ENCODE measurements at regions of chr10 and their contacts with region 1.

Region 1: DNA sequence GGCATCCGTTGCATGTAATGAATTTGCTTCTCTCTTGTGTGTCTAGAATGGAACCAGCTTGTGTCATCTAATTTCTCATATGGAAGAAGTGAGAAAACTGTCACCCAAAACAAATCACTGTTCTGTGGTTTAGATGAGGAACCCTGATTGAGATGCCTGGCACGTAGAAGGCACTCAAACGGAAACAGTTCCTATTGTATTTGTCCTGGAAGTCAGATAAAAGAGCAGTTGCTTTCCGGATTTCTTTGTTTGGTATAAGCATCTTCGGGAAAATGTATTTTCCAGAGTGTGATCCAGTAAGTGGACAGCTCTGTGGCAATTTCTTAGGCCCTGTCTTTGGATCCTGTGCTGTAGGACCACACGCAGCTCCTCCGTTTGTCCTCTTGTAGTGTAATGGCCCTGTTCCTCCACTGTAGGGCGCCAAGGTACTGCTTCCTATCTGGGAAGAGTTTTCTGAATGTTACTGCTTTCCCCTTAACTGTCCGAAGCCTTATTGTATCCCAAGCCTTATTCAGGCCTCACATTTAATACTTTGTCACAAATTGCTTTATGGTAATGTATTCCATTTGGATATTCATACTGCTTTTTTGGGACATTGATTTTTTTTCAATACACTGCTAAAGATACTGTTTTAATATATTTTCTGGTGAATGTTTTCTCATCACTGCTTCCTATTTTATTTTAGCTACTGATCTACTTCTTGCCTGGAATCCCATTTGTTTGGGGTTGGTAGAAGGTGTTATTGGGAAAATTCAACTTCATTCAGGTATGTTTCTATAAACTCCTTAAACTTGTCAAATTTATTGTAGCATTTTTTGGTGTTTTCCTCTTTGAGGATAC is 24.8 kb downstream of the INPP5F start:
- DNase-seq: peak; percentile 68 to 80 (median 76)
- H3K4me3 ChIP-seq: no peak overlapping the region
- H3K27ac ChIP-seq: no peak overlapping the region
- H3K4me1 ChIP-seq: peaks cover 0 to 7% (median 1%) of the 10 kb centered on the region in 4 experiments
- H3K27me3 ChIP-seq: no peaks in the 10 kb centered on the region

Region 2: DNA sequence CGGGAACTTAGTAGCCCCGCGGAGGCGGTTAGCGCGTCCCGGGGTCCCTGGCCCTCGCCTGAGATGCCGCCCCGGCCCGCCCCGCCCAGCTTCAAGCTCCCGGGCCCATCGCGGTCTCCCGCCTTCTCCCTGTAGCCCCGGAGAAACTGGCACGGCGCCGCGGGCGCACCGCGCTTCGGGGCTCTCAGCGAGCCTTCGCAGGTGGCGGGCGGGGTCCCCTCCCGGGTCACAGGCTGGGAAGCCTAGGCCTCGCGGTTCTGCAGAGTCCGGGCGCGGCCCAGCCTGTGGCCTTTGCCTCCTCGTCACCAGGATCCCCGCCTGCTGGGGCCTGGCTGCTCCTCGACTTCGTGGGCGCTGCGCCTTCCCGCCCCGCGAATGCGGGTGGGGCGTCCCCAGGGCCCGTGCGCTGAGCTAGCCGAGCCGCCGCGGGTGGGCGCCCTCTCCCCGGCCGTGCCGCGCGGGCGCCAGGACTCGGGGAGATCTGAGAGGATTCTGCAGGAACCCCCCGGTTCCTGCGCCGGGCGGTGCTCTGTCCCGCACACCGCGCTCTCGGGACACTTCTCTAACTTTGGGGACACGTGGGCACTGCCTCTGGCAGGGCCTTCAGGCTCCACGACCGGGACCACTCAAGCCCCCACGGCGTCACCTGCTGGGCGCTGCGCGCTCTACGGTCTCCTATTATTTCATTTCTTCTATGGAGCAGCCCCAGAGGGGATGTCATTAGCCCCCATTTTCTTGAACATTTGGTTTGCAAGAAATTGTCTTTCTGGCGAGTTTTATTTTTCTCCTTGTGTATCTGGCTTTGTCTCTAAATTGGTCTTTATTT is 207.4 kb before region 1 on chr10:
- CTCF ChIA-PET with region 1: no interaction called
- POLR2A ChIA-PET with region 1: no interaction called
- DNase-seq: peak; percentile 69 to 84 (median 79)
- H3K4me3 ChIP-seq: peak overlapping the region; percentile 63 to 89 (median 84)
- H3K27ac ChIP-seq: no peak overlapping the region
- H3K4me1 ChIP-seq: peaks cover 4 to 53% (median 43%) of the 10 kb centered on the region in 4 experiments
- H3K27me3 ChIP-seq: no peaks in the 10 kb centered on the region

Region 3: DNA sequence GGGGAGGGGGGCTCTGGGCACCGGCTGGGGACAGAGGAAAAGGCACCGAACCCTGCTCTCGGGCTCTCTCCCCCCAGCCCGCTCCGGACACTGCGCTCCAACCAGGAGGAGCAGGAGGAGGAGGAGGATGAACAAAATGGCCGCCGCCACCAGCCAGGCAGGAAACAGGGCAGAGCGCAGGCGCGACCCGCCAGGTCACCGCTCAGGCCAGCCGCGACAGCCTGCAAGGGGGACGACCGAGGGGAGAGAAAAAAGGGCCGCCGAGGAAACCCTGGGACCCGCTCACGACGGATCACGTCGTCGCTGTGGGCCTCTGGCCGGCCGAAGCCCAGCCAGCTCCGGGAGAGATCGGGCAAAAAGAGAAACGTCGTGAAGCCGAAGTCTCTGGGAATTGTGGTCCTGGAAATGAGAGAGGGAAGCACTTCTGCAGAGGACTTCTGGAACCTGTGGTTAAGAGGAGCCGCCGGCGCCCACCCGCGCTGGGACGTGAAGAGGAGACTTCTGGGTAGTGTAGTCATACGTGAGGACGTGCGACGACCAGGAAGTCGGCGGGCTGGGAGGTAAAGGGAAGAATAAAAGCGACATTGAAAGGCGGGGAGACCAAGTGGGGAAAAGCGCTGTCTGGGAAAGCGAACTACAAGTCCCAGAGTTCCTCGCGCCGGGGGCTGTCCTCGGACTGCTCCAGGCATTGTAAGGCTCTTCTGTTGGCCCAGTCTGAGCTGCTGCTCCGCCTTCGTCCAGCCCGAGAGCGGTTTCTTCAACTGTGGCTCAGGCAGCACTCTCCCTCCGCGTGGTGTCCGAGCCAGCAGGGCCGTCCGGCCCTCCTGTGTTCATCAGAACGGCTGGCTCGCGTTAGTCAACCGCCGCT is 153.8 kb before region 1 on chr10 and contains the start of gene TIAL1:
- CTCF ChIA-PET with region 1: no interaction called
- POLR2A ChIA-PET with region 1: no interaction called
- DNase-seq: peak; percentile 99 to 100 (median 99)
- H3K4me3 ChIP-seq: peak within 1 kb of the TSS; percentile 67 to 99 (median 94)
- H3K27ac ChIP-seq: peak within 1 kb of the TSS; percentile 85 to 95
- H3K4me1 ChIP-seq: peaks cover 20 to 47% (median 35%) of the 10 kb centered on the region in 4 experiments
- H3K27me3 ChIP-seq: no peaks in the 10 kb centered on the region

Region 4: DNA sequence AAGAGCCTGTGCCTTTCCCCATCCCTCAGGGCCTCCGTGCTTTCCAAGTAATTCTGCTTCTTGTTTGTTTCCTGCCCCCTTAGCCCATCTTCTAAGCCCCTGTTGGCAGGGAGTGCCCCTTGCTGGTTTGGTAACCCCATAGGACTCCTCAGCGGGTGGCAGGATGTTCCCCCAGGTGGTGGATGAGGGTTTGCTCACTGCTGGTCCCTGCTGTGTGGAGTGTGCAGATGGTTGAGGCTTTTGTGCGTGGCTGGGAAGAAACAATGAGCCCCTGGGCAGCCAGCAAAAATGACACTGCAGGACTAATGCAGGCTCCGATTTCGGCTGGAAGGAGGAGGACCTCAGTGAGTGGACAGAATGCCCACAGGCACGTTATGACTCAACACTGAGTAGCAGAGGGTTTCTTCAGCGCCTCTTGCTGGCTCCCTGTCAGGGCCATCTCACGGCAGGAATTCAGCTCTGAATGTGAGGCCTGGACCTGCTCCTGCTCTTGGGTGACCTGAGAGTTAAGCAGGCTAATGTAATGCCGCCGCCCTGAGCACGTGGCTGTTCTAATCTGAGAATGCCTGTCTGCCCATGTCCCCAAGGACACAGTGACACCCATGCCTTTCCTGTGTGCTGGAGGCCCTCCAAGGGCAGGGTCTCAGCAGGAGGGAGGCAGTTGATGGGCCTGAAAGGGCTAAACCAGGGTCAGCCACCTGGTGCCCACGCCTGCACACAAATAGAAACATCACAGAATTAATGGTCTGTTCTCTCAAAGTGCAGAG is 82.9 kb before region 1 on chr10:
- CTCF ChIA-PET with region 1: no interaction called
- POLR2A ChIA-PET with region 1: no interaction called
- DNase-seq: peak in 2 of 3 donors; percentile 34 to 45
- H3K4me3 ChIP-seq: no peak overlapping the region
- H3K27ac ChIP-seq: no peak overlapping the region
- H3K4me1 ChIP-seq: no peaks in the 10 kb centered on the region
- H3K27me3 ChIP-seq: no peaks in the 10 kb centered on the region

Region 5: DNA sequence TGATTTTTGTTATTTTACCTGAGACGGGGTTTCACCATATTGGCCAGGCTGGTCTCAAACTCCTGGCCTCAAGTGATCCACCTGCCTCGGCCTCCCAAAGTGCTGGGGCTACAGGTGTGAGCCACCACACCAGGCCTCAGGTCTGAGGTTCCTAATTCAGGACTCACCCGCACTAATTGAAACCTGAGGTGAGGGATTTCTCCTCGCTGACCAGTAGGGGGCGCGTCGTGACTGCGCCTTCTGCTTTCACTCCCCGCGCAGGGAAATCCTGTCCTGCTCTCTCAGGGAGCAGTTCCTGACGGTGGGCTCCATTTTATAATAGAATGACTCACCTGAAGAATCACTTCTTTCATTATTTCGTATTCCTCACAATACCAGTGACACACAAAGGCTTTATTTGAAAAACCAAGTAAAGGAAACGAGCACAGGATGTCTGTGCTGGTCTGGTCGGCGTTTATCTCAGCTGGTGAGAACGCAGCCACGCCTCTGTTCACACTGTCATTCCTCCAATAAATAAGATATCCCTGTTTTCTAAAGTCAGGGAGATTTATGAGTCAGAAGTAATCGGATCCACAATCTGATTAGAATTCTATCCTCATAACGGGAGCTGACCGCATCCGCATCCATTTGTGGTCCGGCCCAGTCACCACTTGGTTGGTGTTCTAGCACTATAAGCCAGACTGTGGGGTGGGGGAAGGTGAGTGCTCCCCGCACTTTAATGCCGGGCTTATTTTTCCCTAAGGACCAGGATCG is 64.0 kb before region 1 on chr10:
- CTCF ChIA-PET with region 1: interaction called, 20 read pairs
- POLR2A ChIA-PET with region 1: no interaction called
- DNase-seq: peak; percentile 85 to 89 (median 89)
- H3K4me3 ChIP-seq: peak overlapping the region in 5 of 7 experiments; percentile 46 to 78 (median 57)
- H3K27ac ChIP-seq: no peak overlapping the region
- H3K4me1 ChIP-seq: peaks cover 0 to 16% (median 10%) of the 10 kb centered on the region in 4 experiments
- H3K27me3 ChIP-seq: no peaks in the 10 kb centered on the region

Region 6: GRCh38 chr10:119713744-119714483 is 36.7 kb before region 1 on chr10:
- CTCF ChIA-PET with region 1: no interaction called
- POLR2A ChIA-PET with region 1: no interaction called
- DNase-seq: no peak
- H3K4me3 ChIP-seq: no peak overlapping the region
- H3K27ac ChIP-seq: no peak overlapping the region
- H3K4me1 ChIP-seq: no peaks in the 10 kb centered on the region
- H3K27me3 ChIP-seq: no peaks in the 10 kb centered on the region

Region 7: DNA sequence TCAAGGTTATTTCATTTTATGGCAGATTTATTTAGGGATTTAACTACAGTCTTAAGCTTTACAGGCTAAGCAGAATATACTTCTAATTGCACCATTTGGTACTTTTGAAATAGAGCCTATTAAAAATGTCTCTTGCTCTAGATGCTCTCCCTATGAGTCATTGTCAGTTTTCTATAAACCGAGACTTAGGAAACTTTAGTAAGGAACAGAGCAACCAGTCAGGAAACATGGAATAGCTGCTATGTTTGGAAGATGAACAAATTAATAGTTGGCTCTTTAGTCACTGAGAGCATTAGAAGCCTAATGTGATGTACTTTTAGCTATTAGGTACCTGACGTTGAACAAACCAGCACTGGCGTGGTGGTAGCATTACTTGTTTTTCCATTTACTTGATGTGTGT is 10.5 kb after region 1 on chr10:
- CTCF ChIA-PET with region 1: interaction called, 32 read pairs
- POLR2A ChIA-PET with region 1: no interaction called
- DNase-seq: no peak
- H3K4me3 ChIP-seq: no peak overlapping the region
- H3K27ac ChIP-seq: no peak overlapping the region
- H3K4me1 ChIP-seq: no peaks in the 10 kb centered on the region
- H3K27me3 ChIP-seq: no peaks in the 10 kb centered on the region

Region 8: GRCh38 chr10:119831656-119832055 is 81.0 kb after region 1 on chr10:
- CTCF ChIA-PET with region 1: interaction called, 16 read pairs
- POLR2A ChIA-PET with region 1: no interaction called
- DNase-seq: no peak
- H3K4me3 ChIP-seq: no peak overlapping the region
- H3K27ac ChIP-seq: no peak overlapping the region
- H3K4me1 ChIP-seq: peaks cover 0 to 6% (median 1%) of the 10 kb centered on the region in 4 experiments
- H3K27me3 ChIP-seq: no peaks in the 10 kb centered on the region

Region 9: GRCh38 chr10:119859420-119860258 is 109.0 kb after region 1 on chr10:
- CTCF ChIA-PET with region 1: interaction called, 90 read pairs
- POLR2A ChIA-PET with region 1: interaction called, 3 read pairs
- DNase-seq: peak; percentile 68 to 84 (median 81)
- H3K4me3 ChIP-seq: no peak overlapping the region
- H3K27ac ChIP-seq: no peak overlapping the region
- H3K4me1 ChIP-seq: peaks cover 0 to 14% (median 3%) of the 10 kb centered on the region in 4 experiments
- H3K27me3 ChIP-seq: no peaks in the 10 kb centered on the region